HEK293 (cell line): ENCODE measurements at regions of chr14 and their contacts with region 1.

Region 1: DNA sequence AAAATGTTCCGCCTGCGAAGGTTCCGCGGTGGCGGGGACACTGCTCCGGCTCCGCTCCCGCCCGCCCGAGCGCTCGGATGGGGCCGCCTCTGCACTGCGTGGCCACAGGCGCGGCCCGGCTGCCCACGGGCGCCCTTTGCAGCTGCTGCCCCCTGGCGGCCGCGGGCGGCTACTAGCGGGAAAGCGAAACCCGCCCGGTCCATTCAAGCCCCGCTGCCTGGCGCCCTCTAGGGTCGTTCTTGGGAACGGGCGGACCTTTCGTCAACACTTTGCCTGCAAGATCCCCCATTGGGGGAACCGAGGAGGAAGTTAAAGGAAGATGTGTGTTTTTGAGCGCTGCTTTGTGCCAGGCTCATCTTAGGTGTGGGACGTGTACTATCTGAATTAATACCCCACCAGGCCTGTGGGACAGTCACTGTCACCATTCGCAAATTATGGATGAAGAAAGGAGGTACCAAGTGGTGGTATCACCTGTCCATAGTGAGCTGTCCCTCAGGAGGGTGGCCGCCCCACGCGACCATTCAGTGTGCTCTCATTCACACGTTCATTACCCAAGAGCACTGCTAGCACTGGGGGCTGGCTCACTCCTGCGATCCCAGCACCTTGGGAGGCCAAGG is 19.4 kb downstream of the GPR132 start:
- H3K4me3 ChIP-seq: no peak overlapping the region; the same call in 1 of the 2 replicates
- H3K27ac ChIP-seq: no peak overlapping the region
- H3K4me1 ChIP-seq: peaks cover 2% of the 10 kb centered on the region; the same call in 1 of the 2 replicates
- CTCF ChIP-seq: peak; percentile 96

Region 2: GRCh38 chr14:104976198-104977007 is 69.4 kb before region 1 on chr14:
- CTCF ChIA-PET with region 1: interaction called, 109 read pairs
- POLR2A ChIA-PET with region 1: interaction called, 3 read pairs
- H3K4me3 ChIP-seq: no peak overlapping the region
- H3K27ac ChIP-seq: no peak overlapping the region
- H3K4me1 ChIP-seq: peaks cover 8% of the 10 kb centered on the region; the same call in 1 of the 2 replicates
- CTCF ChIP-seq: peak; percentile 88

Region 3: DNA sequence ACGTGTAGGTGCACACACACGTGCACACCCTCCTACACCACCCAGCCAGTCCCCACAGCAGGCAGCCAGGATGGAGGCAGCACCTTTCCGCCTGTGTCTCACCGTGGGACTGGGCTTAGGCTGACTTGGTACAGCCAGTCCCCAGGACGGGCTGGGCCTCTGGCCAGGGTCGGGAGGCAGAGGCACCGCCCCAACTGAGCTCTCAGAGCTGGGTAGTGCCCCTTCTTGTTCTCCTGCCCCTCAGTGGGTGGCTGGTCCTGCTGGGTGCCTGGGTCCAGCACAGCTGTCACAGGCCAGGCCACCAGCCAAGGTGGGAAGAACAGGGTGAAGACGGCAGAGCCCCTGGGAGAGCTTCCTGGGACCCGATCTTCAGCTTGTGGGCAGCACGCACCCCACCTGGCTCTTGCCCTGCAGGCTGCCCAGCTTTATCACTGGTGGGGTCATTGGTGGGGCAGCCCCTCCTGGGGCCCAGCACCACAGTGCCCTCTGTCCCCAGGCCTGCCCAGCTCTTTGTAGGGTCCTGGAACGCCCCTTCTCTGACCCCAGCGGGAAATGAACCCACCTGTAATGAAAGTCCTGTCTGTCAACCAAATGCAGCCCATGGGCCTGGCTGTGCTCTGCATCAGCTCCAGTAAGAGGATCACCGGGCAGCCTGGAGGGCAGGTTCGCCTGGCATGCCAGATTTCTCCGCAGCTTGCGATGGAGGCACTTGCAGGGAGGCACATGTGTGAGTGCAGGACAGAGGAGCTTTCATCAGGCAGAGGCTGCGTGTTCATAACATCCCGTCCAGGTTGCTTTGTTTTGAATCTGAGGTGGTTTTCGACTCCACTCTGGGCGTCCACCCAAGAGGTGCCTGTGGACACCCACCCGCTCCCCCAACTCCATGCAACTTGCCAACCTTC is 39.6 kb before region 1 on chr14:
- CTCF ChIA-PET with region 1: interaction called, 32 read pairs
- POLR2A ChIA-PET with region 1: no interaction called
- H3K4me3 ChIP-seq: no peak overlapping the region
- H3K27ac ChIP-seq: no peak overlapping the region
- H3K4me1 ChIP-seq: no peaks in the 10 kb centered on the region
- CTCF ChIP-seq: no peak

Region 4: GRCh38 chr14:105020815-105021655 is 24.8 kb before region 1 on chr14 and contains the start of gene CDCA4:
- CTCF ChIA-PET with region 1: interaction called, 59 read pairs
- POLR2A ChIA-PET with region 1: interaction called, 7 read pairs
- H3K4me3 ChIP-seq: peak within 1 kb of the TSS; percentile 96
- H3K27ac ChIP-seq: peak within 1 kb of the TSS; percentile 99
- H3K4me1 ChIP-seq: peaks cover 11% of the 10 kb centered on the region
- CTCF ChIP-seq: no peak

Region 5: GRCh38 chr14:105059035-105059924 is 13.5 kb after region 1 on chr14:
- CTCF ChIA-PET with region 1: interaction called, 21 read pairs
- POLR2A ChIA-PET with region 1: no interaction called
- H3K4me3 ChIP-seq: no peak overlapping the region
- H3K27ac ChIP-seq: no peak overlapping the region
- H3K4me1 ChIP-seq: no peaks in the 10 kb centered on the region
- CTCF ChIP-seq: peak; percentile 53; the same call in 1 of the 2 replicates

Region 6: GRCh38 chr14:105527661-105528581 is 482.1 kb after region 1 on chr14:
- CTCF ChIA-PET with region 1: no interaction called
- POLR2A ChIA-PET with region 1: no interaction called
- H3K4me3 ChIP-seq: peak overlapping the region; percentile 40
- H3K27ac ChIP-seq: peak overlapping the region; percentile 74; the same call in 1 of the 2 replicates
- H3K4me1 ChIP-seq: 0 out of 2 replicates have a peak, but pooled peaks cover 2% of the 10 kb centered on the region
- CTCF ChIP-seq: peak; percentile 92